ENCODE measurements at regions of chr7 and their contacts with region 1.

Region 1: GRCh38 chr7:40700643-40701421 is 566.0 kb downstream of the SUGCT start:
- DNase-seq: peak; percentile 17
- H3K4me3 ChIP-seq: no peak overlapping the region
- H3K27ac ChIP-seq: no peak overlapping the region
- H3K4me1 ChIP-seq: peaks cover 10% of the 10 kb centered on the region
- CTCF ChIP-seq: peak; percentile 52

Region 2: DNA sequence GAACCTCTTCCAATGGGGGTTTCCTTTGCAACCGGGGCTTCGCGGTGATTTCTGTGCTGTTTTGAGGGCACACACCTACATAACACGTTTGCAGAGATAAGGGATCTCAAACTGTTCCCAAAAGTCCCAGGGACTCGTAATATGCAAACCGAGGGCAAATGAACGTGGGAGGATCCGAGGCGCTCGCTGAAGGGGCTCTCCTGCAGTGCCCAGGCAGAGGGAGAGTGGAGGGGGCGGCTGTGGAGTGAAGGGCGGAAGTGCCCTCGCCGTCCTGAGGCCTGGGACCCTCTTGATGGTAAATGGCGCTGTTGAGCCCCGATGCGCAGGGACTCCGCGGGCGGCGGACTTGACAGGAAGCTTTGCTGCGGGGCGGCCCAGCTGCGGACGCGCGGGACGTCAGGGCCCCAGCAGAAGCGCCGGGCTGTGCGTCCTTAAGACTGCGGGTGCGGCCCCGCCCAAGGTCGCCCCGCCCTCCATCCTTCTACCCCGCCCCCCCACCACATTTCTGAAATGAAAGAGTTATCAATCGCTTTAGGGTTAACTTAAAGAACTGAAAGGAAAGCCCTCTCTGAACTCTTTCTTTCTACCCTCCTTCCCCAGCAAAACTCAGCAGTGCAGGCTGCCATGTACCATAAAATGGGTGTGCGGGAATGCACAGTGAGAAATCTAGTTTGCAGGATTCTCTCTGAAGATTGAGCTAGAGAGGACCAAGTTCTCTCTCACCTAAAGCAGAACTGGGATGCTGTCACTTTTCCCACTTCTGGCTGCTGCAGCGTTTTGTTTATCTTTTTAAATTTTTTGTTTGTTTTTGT is 1286.4 kb before region 1 on chr7:
- CTCF ChIA-PET with region 1: no interaction called
- POLR2A ChIA-PET with region 1: no interaction called
- intact Hi-C with region 1: no loop called
- DNase-seq: peak; percentile 18
- H3K4me3 ChIP-seq: no peak overlapping the region
- H3K27ac ChIP-seq: no peak overlapping the region
- H3K4me1 ChIP-seq: no peaks in the 10 kb centered on the region
- CTCF ChIP-seq: no peak

Region 3: DNA sequence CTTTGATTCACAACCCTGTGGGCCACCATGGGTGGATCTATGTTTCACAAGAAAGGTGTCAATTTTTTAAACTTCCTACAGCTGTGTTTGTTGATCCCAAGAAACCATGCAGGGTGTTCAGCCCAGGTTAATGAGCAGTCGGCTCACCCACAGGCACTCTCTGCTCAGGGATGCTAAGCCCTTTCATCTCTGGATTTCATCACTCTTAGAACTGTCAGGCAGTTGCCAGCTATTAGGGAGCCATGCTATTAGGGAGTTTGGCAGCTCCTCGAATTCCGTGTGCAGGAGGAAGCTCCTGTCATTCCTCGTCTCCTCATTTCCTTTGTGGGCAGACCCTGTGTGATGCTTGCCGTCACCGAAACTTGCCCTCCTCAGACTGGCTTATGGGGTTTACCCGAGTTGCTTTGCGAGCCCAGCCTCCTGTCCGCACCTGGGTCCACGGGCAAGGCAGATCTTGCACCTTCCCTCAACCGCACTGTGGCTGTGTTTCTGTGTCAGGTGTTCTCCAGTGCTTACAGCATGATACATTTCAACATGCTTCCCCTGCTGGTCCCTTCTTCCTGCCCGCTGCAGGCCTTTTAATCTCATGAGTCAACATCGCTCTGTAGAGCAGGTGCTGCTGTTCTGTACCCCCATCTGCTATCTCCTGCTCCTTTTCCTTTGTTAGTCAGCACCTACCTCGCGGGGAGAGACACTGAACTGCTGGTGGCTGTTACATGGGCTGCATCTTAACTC is 56.2 kb before region 1 on chr7:
- CTCF ChIA-PET with region 1: no interaction called
- POLR2A ChIA-PET with region 1: no interaction called
- intact Hi-C with region 1: loop called (anchors 10 kb)
- DNase-seq: no peak
- H3K4me3 ChIP-seq: no peak overlapping the region
- H3K27ac ChIP-seq: no peak overlapping the region
- H3K4me1 ChIP-seq: no peaks in the 10 kb centered on the region
- CTCF ChIP-seq: no peak